Heart right ventricle (tissue), 16 donors: ENCODE measurements at regions of chr6 and their contacts with region 1.

Region 1: GRCh38 chr6:13711733-13712598 is at the start of gene RANBP9:
- DNase-seq: peak; percentile 88 to 89
- ATAC-seq: peak; percentile 92 to 97 (median 94)
- H3K4me3 ChIP-seq: peak within 1 kb of the TSS; percentile 57 to 88 (median 82)
- H3K27ac ChIP-seq: peak within 1 kb of the TSS; percentile 88 to 96 (median 93)
- H3K4me1 ChIP-seq: peaks cover 0 to 43% (median 36%) of the 10 kb centered on the region in 9 donors
- H3K27me3 ChIP-seq: no peaks in the 10 kb centered on the region
- CTCF ChIP-seq: peak in 1 of 9 donors; percentile 4
- total RNA-seq, gene RANBP9: 29.4 to 41.6 (median 35.9) TPM

Region 2: DNA sequence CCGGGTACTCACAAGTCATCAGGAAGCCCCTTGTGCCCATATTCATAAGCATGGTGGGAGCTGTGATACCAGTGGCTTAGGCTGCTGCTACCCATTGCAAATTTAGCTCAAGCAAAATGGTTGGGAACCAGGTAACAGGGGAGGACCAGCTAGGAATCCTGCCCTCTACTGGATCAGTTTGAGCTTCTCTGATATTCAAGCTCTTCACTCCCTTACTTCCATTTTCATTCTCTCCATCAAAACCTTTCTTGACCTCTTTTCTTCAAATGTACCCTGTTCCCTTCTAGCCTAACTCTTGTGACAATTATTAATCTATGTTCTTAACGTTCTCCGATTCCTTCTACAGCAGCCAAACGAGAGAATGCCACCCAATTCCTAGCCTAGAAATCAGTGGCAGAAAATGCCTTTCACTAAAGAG is 87.1 kb before region 1 on chr6:
- intact Hi-C with region 1: loop called in 4 of 10 experiments (anchors 5 to 10 kb)
- DNase-seq: no peak
- ATAC-seq: peak in 3 of 8 donors; percentile 33 to 58 (median 48)
- H3K4me3 ChIP-seq: no peak overlapping the region
- H3K27ac ChIP-seq: no peak overlapping the region
- H3K4me1 ChIP-seq: no peaks in the 10 kb centered on the region
- H3K27me3 ChIP-seq: no peaks in the 10 kb centered on the region
- CTCF ChIP-seq: peak in 8 of 9 donors; percentile 12 to 55 (median 42)

Region 3: GRCh38 chr6:13635948-13636658 is 75.9 kb before region 1 on chr6:
- intact Hi-C with region 1: loop called in 1 of 10 experiments (anchors 5 kb)
- DNase-seq: no peak
- ATAC-seq: peak in 1 of 8 donors; percentile 65
- H3K4me3 ChIP-seq: no peak overlapping the region
- H3K27ac ChIP-seq: peak overlapping the region in 2 of 10 donors; percentile 48 to 58
- H3K4me1 ChIP-seq: peaks cover 0 to 26% (median 8%) of the 10 kb centered on the region in 9 donors
- H3K27me3 ChIP-seq: no peaks in the 10 kb centered on the region
- CTCF ChIP-seq: no peak

Region 4: GRCh38 chr6:13767121-13767808 is 55.3 kb after region 1 on chr6:
- intact Hi-C with region 1: loop called in 2 of 10 experiments (anchors 5 to 10 kb)
- DNase-seq: peak; percentile 35 to 78
- ATAC-seq: peak; percentile 86 to 96 (median 92)
- H3K4me3 ChIP-seq: peak overlapping the region in 9 of 10 donors; percentile 15 to 53 (median 44)
- H3K27ac ChIP-seq: peak overlapping the region in 7 of 10 donors; percentile 22 to 69 (median 52)
- H3K4me1 ChIP-seq: peaks cover 0 to 39% (median 13%) of the 10 kb centered on the region in 9 donors
- H3K27me3 ChIP-seq: no peaks in the 10 kb centered on the region
- CTCF ChIP-seq: peak in 6 of 9 donors; percentile 26 to 50 (median 35)

Region 5: GRCh38 chr6:13814176-13814937 is 102.4 kb after region 1 on chr6 and contains the start of gene MCUR1:
- intact Hi-C with region 1: loop called in 2 of 10 experiments (anchors 2 to 10 kb)
- DNase-seq: peak; percentile 87
- ATAC-seq: peak; percentile 93 to 98 (median 96)
- H3K4me3 ChIP-seq: peak within 1 kb of the TSS; percentile 62 to 98 (median 88)
- H3K27ac ChIP-seq: peak within 1 kb of the TSS; percentile 79 to 99 (median 96)
- H3K4me1 ChIP-seq: peaks cover 0 to 43% (median 38%) of the 10 kb centered on the region in 9 donors
- H3K27me3 ChIP-seq: no peaks in the 10 kb centered on the region
- CTCF ChIP-seq: peak in 5 of 9 donors; percentile 13 to 54 (median 48)
- total RNA-seq, gene MCUR1: 25.2 to 40.8 (median 32.7) TPM

Region 6: GRCh38 chr6:13825871-13826270 is 113.9 kb after region 1 on chr6:
- intact Hi-C with region 1: no loop called
- DNase-seq: no peak
- ATAC-seq: no peak
- H3K4me3 ChIP-seq: no peak overlapping the region
- H3K27ac ChIP-seq: no peak overlapping the region
- H3K4me1 ChIP-seq: peaks cover 0 to 6% (median 0%) of the 10 kb centered on the region in 9 donors
- H3K27me3 ChIP-seq: no peaks in the 10 kb centered on the region
- CTCF ChIP-seq: no peak